Sigmoid colon (tissue), 7 donors: ENCODE measurements at regions of chr15 and their contacts with region 1.

Region 1: DNA sequence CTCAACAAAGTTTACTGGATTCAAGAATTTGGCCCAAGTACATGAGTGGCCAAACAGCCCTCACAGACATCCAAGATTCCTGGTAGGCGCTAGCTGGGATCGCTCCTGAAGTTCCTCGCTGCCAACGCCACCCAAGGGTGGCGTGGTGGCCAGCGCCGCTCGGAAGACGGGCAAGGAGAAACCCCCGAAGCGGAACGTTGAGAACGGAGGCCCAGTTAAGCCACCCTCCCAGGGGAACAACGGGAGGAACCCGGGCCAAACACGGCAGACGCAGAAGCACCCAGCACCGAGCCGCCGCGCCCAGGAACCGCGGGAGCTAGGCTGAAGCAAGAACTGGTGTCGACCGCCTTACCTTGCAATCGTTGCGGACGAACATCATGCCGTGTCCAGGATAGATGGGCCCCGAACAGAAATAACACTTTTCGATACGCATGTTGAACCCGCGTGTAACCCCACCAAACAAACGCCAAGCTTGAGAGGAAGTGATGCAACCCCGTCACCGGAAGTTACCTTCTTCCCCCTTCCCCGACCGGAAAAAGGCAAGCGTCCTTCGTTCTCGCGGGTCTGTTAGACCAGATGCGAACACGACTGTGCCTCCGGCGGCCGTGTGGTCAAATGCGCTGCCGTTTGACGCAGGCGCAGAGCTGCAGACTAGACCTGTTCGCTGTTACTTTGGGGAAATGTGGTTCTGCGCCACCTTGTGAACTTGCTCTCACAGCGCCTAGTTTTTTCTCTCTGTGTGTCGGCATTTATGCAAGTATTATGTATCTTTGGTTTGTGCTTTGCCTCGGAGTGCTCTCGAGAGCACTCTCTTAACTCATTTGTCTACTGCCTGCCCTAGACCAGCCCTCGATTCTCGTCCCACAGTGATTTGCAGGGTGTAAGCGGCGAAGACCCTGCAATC is at the start of gene RSL24D1:
- DNase-seq: peak; percentile 98
- H3K4me3 ChIP-seq: peak within 1 kb of the TSS; percentile 81 to 93 (median 92)
- H3K27ac ChIP-seq: peak within 1 kb of the TSS; percentile 93 to 95 (median 94)
- H3K4me1 ChIP-seq: peaks cover 0 to 38% (median 32%) of the 10 kb centered on the region in 4 donors
- H3K27me3 ChIP-seq: no peaks in the 10 kb centered on the region
- CTCF ChIP-seq: peak; percentile 11 to 33 (median 15)
- EP300 ChIP-seq: peak in 1 of 4 donors; percentile 53
- POLR2A ChIP-seq: peak; percentile 55 to 63
- total RNA-seq, gene RSL24D1: 106 to 171 (median 124) TPM

Region 2: DNA sequence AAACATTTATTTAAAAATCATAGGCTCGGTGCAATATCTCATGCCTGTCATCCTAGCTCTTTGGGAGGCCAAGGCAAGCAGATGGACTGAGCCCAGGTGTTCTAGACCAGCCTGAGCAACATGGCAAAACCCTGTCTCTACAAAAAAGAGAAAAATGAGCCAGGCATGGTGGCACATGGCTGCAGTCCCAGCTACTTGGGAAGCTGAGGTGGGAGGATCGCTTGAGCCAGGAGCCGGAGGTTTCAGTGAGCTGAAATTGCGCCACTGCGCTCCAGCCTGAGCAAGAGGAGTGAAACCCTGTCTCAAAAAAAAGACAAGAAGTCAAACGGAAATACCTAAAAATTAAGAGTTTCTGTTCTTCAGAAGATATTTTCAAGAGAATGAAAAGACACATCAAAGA is 122.3 kb before region 1 on chr15:
- intact Hi-C with region 1: no loop called
- DNase-seq: no peak
- H3K4me3 ChIP-seq: no peak overlapping the region
- H3K27ac ChIP-seq: no peak overlapping the region
- H3K4me1 ChIP-seq: no peaks in the 10 kb centered on the region
- H3K27me3 ChIP-seq: no peaks in the 10 kb centered on the region
- CTCF ChIP-seq: no peak
- EP300 ChIP-seq: no peak
- POLR2A ChIP-seq: no peak

Region 3: DNA sequence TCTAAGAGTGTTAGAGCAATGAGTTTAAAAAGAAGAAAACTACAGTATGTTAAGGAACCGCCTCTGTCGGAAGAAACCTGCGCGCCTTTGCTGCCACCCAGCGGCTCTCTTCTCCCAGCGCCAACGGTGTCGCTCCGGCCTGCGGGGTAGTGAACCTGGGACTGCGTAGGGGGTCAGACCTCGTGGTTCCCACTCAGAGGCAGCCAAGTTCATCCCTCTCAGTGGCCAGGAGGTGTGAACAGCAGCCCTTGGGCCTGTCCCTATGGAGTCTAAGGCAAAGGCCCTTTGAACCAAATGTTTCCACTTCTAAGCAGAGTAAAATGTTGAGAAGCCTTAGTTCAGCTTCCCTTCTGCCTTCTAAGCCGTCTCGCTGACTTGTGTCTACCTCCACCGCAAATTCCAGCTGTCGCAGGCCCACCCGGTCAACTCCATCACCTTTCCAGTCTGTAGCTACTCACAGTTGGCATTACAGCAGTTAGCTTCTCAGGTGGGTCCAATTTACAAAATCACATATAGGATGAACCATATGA is 93.9 kb after region 1 on chr15:
- intact Hi-C with region 1: loop called (anchors 5 kb)
- DNase-seq: peak; percentile 92
- H3K4me3 ChIP-seq: peak overlapping the region; percentile 78 to 85 (median 80)
- H3K27ac ChIP-seq: peak overlapping the region; percentile 91 to 95 (median 92)
- H3K4me1 ChIP-seq: peaks cover 0 to 15% (median 6%) of the 10 kb centered on the region in 4 donors
- H3K27me3 ChIP-seq: no peaks in the 10 kb centered on the region
- CTCF ChIP-seq: peak; percentile 67 to 85 (median 78)
- EP300 ChIP-seq: no peak
- POLR2A ChIP-seq: no peak

Region 4: GRCh38 chr15:55407949-55408791 is 211.5 kb after region 1 on chr15 and contains the starts of genes CCPG1 and PIERCE2:
- intact Hi-C with region 1: loop called (anchors 5 kb)
- DNase-seq: peak; percentile 95
- H3K4me3 ChIP-seq: peak within 1 kb of the TSS; percentile 64 to 94 (median 81)
- H3K27ac ChIP-seq: peak within 1 kb of the TSS; percentile 90 to 97 (median 92)
- H3K4me1 ChIP-seq: peaks cover 0 to 50% (median 31%) of the 10 kb centered on the region in 4 donors
- H3K27me3 ChIP-seq: no peaks in the 10 kb centered on the region
- CTCF ChIP-seq: peak; percentile 86 to 92 (median 90)
- EP300 ChIP-seq: no peak
- POLR2A ChIP-seq: peak; percentile 74 to 75
- total RNA-seq, gene CCPG1: 49.0 to 58.7 (median 55.4) TPM
- total RNA-seq, gene PIERCE2: 0.81 to 6.6 (median 5.3) TPM